WTC11 (cell line): ENCODE measurements at regions of chr11 and their contacts with region 1.

Region 1: DNA sequence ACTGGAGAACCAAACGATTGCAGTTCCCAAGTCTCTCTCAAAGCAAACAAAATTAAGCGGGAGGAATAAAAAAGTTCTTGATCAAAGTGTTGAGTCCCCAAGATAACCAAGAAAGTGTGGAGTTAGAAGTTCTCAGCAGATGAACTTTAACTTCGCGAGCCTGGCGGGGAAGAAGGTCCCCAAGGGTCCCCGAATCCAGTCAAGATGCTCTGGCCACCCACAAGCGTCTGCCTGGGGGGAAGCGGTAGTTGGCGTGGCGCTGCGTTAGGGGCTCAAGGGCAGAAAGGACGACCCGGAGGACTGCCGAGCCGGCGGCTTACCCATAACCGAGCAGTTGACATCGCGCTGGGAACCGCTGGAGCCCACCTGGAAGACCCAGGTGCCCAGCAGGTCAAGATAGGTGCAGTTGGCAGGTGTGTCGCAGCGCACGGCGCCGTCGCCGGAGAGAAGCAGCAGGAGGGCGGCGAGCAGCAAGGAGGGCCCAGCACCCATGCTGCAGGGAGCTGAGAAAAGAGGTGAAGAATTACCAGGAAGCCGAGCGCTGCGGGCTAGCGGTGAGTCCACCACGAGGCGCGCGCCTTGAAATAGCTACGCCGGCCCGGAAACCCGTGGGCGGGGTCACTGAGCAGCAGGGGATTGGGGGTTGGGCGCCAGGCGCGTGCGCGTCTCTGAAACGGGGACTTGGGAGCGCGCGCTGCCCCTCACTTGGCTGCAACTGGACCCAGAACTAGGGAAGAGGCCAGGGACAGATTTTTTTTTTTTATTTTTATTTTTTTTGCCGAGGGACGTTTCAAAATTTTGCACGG is at the start of gene CTSC:
- DNase-seq: peak; percentile 93
- ATAC-seq: peak; percentile 77
- H3K4me3 Mint-ChIP-seq: peak within 1 kb of the TSS; percentile 96
- H3K27ac Mint-ChIP-seq: peak within 1 kb of the TSS; percentile 97
- H3K4me1 Mint-ChIP-seq: peaks cover 53% of the 10 kb centered on the region
- H3K27me3 Mint-ChIP-seq: no peaks in the 10 kb centered on the region
- CTCF ChIP-seq: no peak
- total RNA-seq, gene CTSC: 269 to 299 TPM (median 293 TPM) in 3 replicates

Region 2: GRCh38 chr11:88307749-88308425 is 29.5 kb before region 1 on chr11:
- CTCF ChIA-PET with region 1: interaction called, 8 read pairs
- POLR2A ChIA-PET with region 1: interaction called, 26 read pairs
- DNase-seq: peak; percentile 33
- ATAC-seq: peak; percentile 75
- H3K4me3 Mint-ChIP-seq: peak overlapping the region; percentile 65
- H3K27ac Mint-ChIP-seq: peak overlapping the region; percentile 100
- H3K4me1 Mint-ChIP-seq: peaks cover 76% of the 10 kb centered on the region
- H3K27me3 Mint-ChIP-seq: no peaks in the 10 kb centered on the region
- CTCF ChIP-seq: no peak

Region 3: GRCh38 chr11:88327061-88327460 is 10.3 kb before region 1 on chr11:
- CTCF ChIA-PET with region 1: interaction called, 10 read pairs
- POLR2A ChIA-PET with region 1: interaction called, 8 read pairs
- DNase-seq: no peak
- ATAC-seq: no peak
- H3K4me3 Mint-ChIP-seq: peak overlapping the region; percentile 14; the same call in 1 of the 2 replicates
- H3K27ac Mint-ChIP-seq: no peak overlapping the region
- H3K4me1 Mint-ChIP-seq: peaks cover 96% of the 10 kb centered on the region
- H3K27me3 Mint-ChIP-seq: no peaks in the 10 kb centered on the region
- CTCF ChIP-seq: no peak

Region 4: DNA sequence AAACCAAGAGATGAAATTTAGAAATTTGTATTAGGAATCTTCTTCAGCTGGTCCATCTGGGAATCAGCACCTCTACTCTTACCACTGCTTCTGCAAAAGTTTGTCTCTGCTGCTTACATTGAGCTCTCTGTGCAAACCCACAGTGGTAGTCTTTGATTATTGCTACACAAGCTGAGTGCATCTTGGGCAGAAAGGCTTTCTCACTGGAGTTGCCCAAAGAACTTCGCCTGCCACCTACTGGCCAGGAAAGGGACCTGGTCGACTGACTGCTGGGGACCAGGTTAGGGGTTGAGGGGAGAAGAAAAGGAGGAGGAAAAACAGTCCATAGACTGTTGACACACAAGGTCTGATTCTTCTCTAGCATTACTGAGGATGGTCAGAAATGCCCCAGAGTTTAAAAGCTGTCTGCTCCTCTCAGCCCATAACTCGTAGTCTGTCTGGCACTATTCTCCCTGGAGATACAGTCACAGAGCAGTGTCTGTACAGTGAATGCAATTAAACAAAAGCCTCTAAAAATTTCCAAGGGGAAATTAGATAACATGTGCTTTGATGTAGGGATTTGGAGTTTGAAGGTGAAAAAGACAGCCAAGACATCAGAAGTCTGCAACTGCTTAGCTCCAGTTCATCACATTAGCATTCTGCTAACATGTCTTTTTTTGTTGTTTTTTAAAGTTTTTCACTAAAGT is 215.1 kb after region 1 on chr11:
- CTCF ChIA-PET with region 1: interaction called, 10 read pairs
- POLR2A ChIA-PET with region 1: no interaction called
- DNase-seq: peak; percentile 73
- ATAC-seq: peak; percentile 98
- H3K4me3 Mint-ChIP-seq: no peak overlapping the region
- H3K27ac Mint-ChIP-seq: no peak overlapping the region
- H3K4me1 Mint-ChIP-seq: peaks cover 15% of the 10 kb centered on the region
- H3K27me3 Mint-ChIP-seq: no peaks in the 10 kb centered on the region
- CTCF ChIP-seq: peak; percentile 68